A549 (cell line): ENCODE measurements at regions of chr20 and their contacts with region 1.

Region 1: DNA sequence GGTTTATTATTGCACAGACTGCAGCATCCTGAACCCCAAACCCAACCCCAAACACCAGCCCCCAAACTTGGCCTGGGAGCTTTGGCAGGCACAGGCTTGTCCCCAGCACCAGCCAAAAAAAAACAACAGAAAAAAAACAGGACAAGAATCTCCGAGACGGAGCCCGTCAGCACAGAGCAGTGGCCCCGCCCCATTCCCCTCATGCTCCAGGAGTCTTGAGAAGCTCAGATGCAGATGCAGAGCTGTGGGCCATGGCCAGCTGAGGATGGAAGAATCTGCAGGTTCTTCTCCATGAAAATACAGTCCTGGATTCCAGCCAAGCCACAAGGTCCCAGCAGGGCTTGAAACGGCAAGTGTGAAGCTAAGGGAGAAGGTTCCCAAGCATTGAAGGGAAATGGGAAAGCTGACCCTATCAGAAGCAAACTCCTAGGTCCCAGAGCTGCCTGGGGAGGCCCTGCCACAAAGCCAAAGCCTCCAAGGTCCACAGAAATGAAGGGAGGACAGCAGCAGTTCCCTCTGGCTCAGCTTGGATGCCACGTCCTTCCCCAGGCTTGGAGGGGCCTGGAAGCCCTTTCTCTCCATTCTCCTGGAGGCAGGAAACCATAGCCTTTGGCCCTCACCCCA is 75.2 kb downstream of the JPH2 start:
- DNase-seq: no peak
- ATAC-seq: no peak
- H3K4me3 ChIP-seq: no peak overlapping the region
- H3K27ac ChIP-seq: no peak overlapping the region; a peak in 1 of 6 replicates
- H3K4me1 ChIP-seq: no peaks in the 10 kb centered on the region; the same call in 2 of the 3 replicates
- CTCF ChIP-seq: no peak
- EP300 ChIP-seq: no peak
- POLR2A ChIP-seq: no peak
- RAD21 ChIP-seq: no peak

Region 2: DNA sequence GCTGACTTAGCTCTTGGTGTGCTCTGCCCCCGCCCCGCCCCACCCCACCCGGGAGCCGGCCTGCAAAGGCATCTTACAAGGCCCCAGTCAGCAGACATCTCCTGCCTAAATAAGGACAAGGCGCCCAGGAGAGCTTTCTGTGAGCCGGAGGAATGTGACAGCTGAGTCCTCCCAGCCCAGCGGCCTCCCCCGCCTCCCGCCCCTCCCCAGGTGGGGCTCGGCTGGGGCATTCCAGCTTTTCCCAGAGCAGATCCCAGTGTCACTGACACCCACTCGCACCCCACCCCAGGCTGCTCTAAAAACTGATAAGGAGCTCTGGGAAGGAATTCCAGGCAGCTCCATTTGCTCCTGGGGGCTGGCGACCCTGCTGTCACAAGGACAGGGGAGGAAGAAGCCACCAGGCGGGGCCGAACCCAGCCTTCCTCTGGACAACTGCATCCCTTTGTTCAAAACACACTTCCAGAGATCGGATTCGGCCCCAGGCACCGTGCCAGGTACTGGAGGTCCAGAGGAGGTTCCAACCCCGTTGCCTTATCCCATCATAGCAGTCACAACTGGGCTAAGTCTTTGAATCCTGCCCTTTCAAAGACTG is 25.5 kb after region 1 on chr20:
- CTCF ChIA-PET with region 1: interaction called, 65 read pairs
- POLR2A ChIA-PET with region 1: no interaction called
- DNase-seq: peak in 1 of 2 experiments; percentile 33
- ATAC-seq: no peak; a peak in 1 of 6 replicates
- H3K4me3 ChIP-seq: no peak overlapping the region
- H3K27ac ChIP-seq: no peak overlapping the region
- H3K4me1 ChIP-seq: no peaks in the 10 kb centered on the region
- CTCF ChIP-seq: no peak
- EP300 ChIP-seq: no peak
- POLR2A ChIP-seq: no peak
- RAD21 ChIP-seq: no peak

Region 3: GRCh38 chr20:44153636-44154043 is 41.8 kb after region 1 on chr20:
- CTCF ChIA-PET with region 1: interaction called, 11 read pairs
- POLR2A ChIA-PET with region 1: no interaction called
- DNase-seq: no peak
- ATAC-seq: peak in 1 of 2 experiments; percentile 56; a peak in 2 of 6 replicates
- H3K4me3 ChIP-seq: no peak overlapping the region
- H3K27ac ChIP-seq: no peak overlapping the region
- H3K4me1 ChIP-seq: 0 out of 3 replicates have a peak, but pooled peaks cover 3% of the 10 kb centered on the region
- CTCF ChIP-seq: no peak
- EP300 ChIP-seq: no peak
- POLR2A ChIP-seq: no peak
- RAD21 ChIP-seq: no peak

Region 4: DNA sequence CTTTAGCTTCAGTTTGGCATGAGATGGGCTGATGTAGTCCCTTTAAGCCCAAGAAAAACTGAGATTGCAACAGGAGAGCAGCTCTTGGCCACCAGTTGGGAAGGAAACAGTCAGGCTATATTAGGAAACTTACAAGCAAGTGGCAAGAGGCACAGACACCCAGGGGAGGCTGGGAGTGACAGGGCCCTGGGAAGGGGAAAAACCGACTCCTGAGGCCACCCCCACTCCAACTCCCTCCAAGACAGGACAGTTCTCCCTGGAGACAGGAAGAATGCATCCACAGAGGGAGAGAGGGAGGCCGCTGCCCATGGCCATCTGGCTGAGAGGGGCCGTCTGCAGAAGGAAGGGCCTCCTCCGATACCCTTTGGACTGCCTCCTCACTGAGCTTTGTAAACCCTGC is 54.7 kb after region 1 on chr20:
- CTCF ChIA-PET with region 1: interaction called, 63 read pairs
- POLR2A ChIA-PET with region 1: no interaction called
- DNase-seq: peak; percentile 41 to 65
- ATAC-seq: peak; percentile 75 to 79
- H3K4me3 ChIP-seq: no peak overlapping the region
- H3K27ac ChIP-seq: peak overlapping the region; percentile 67 to 83
- H3K4me1 ChIP-seq: peaks cover 38% of the 10 kb centered on the region
- CTCF ChIP-seq: no peak
- EP300 ChIP-seq: no peak
- POLR2A ChIP-seq: no peak
- RAD21 ChIP-seq: no peak

Region 5: GRCh38 chr20:44187051-44187762 is 75.4 kb after region 1 on chr20 and contains the start of gene JPH2:
- CTCF ChIA-PET with region 1: interaction called, 460 read pairs
- POLR2A ChIA-PET with region 1: interaction called, 20 read pairs
- DNase-seq: peak; percentile 58 to 60
- ATAC-seq: peak; percentile 74 to 81
- H3K4me3 ChIP-seq: peak within 1 kb of the TSS; percentile 48
- H3K27ac ChIP-seq: peak within 1 kb of the TSS; percentile 81 to 86
- H3K4me1 ChIP-seq: peaks cover 25% of the 10 kb centered on the region
- CTCF ChIP-seq: no peak
- EP300 ChIP-seq: no peak
- POLR2A ChIP-seq: 0 out of 2 replicates have a peak, but pooled peaks have one; percentile 32
- RAD21 ChIP-seq: no peak
- polyA plus RNA-seq, gene JPH2: 0.83 and 1.0 TPM in 2 replicates

Region 6: DNA sequence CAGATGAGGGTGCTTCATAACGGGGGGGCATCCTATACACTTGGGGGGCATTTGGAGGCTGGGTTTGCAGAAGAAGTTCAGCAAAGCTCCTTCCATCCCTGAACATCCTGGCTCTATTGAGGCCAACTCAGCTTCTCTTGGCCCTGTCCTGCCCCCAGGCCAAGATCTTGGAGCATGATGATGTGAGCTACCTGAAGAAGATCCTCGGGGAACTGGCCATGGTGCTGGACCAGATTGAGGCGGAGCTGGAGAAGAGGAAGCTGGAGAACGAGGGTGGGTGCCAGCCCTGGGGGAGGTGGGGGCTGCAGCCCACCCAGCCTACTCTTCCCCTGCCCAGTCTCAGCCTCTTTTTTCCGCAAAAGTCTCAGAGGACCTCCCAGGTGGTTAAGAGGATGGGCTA is 152.5 kb after region 1 on chr20:
- CTCF ChIA-PET with region 1: no interaction called
- POLR2A ChIA-PET with region 1: no interaction called
- DNase-seq: no peak
- ATAC-seq: no peak
- H3K4me3 ChIP-seq: no peak overlapping the region
- H3K27ac ChIP-seq: no peak overlapping the region
- H3K4me1 ChIP-seq: no peaks in the 10 kb centered on the region
- CTCF ChIP-seq: no peak
- EP300 ChIP-seq: no peak
- POLR2A ChIP-seq: no peak
- RAD21 ChIP-seq: no peak

Region 7: GRCh38 chr20:44310664-44311639 is 199.1 kb after region 1 on chr20 and contains the start of gene FITM2:
- CTCF ChIA-PET with region 1: interaction called, 27 read pairs
- POLR2A ChIA-PET with region 1: no interaction called
- DNase-seq: peak; percentile 96 to 98
- ATAC-seq: peak; percentile 95 to 98
- H3K4me3 ChIP-seq: peak within 1 kb of the TSS; percentile 89
- H3K27ac ChIP-seq: peak within 1 kb of the TSS; percentile 92 to 95
- H3K4me1 ChIP-seq: peaks cover 7% of the 10 kb centered on the region; the same call in 2 of the 3 replicates
- CTCF ChIP-seq: peak; percentile 89
- EP300 ChIP-seq: no peak
- POLR2A ChIP-seq: peak; percentile 88
- RAD21 ChIP-seq: peak; percentile 79 to 88
- polyA plus RNA-seq, gene FITM2: 13.1 and 15.2 TPM in 2 replicates